CD8-positive, alpha-beta T cell (primary cell): ENCODE measurements at regions of chr1 and their contacts with region 1.

Region 1: GRCh38 chr1:38818175-38818976 is 41.2 kb downstream of the RRAGC start:
- DNase-seq: peak; percentile 21 to 69 (median 47)
- ATAC-seq: peak; percentile 64
- H3K4me3 ChIP-seq: peak overlapping the region in 1 of 2 experiments; percentile 35
- H3K4me3 Mint-ChIP-seq: peak overlapping the region; percentile 43
- H3K27ac ChIP-seq: no peak overlapping the region
- H3K27ac Mint-ChIP-seq: no peak overlapping the region
- H3K4me1 ChIP-seq: peaks cover 20% of the 10 kb centered on the region
- H3K4me1 Mint-ChIP-seq: peaks cover 14% of the 10 kb centered on the region
- H3K27me3 ChIP-seq: peaks cover 22% of the 10 kb centered on the region in 2 experiments
- H3K27me3 Mint-ChIP-seq: peaks cover 59% of the 10 kb centered on the region
- CTCF ChIP-seq: peak; percentile 80

Region 2: GRCh38 chr1:38026592-38027200 is 791.7 kb before region 1 on chr1:
- CTCF ChIA-PET with region 1: no interaction called
- POLR2A ChIA-PET with region 1: no interaction called
- intact Hi-C with region 1: loop called in 1 of 2 experiments (anchors 5 kb)
- DNase-seq: peak in 2 of 9 experiments; percentile 41 to 54
- ATAC-seq: no peak
- H3K4me3 ChIP-seq: no peak overlapping the region
- H3K4me3 Mint-ChIP-seq: no peak overlapping the region
- H3K27ac ChIP-seq: no peak overlapping the region
- H3K27ac Mint-ChIP-seq: no peak overlapping the region
- H3K4me1 ChIP-seq: peaks cover 18% of the 10 kb centered on the region
- H3K4me1 Mint-ChIP-seq: peaks cover 32% of the 10 kb centered on the region
- H3K27me3 ChIP-seq: no peaks in the 10 kb centered on the region
- H3K27me3 Mint-ChIP-seq: no peaks in the 10 kb centered on the region
- CTCF ChIP-seq: no peak

Region 3: DNA sequence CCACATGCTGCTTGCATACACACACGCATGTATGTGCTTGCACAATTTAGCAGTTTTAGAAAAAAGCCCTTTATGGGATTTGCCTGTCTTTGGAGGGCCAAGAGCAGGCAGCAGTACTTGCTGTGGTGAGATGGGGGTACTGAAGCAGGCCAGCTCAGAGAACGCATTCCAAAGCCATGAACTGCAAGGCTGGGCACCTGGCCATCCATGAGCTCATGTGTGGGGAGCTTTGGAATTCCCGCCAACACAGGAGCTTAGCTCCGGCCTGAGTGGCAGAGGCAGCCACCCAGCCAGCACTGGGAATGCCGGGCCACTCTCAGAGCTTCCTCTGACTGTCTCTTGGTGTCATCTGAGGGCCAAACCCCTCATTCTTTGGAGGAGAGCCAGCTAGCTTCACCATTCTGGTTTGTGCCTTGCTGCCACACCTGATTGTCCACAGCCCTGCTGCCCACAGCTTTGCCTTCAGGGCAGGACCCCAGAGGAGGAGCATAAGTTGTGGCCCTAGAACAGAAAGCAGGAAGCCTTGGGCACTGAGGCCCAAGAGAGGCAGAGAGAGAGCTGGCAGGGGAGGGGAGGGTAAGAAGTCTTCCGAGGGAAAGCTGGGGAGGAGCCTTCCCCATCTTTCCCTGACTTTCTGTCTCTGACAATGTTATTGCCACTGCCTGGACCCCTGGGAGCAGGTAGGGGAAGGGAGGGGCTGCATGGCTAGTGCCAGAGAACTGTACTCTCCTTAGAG is 679.7 kb before region 1 on chr1:
- CTCF ChIA-PET with region 1: no interaction called
- POLR2A ChIA-PET with region 1: no interaction called
- intact Hi-C with region 1: loop called in 1 of 2 experiments (anchors 10 kb)
- DNase-seq: no peak
- ATAC-seq: no peak
- H3K4me3 ChIP-seq: no peak overlapping the region
- H3K4me3 Mint-ChIP-seq: no peak overlapping the region
- H3K27ac ChIP-seq: no peak overlapping the region
- H3K27ac Mint-ChIP-seq: no peak overlapping the region
- H3K4me1 ChIP-seq: no peaks in the 10 kb centered on the region
- H3K4me1 Mint-ChIP-seq: no peaks in the 10 kb centered on the region
- H3K27me3 ChIP-seq: peaks cover 5 to 7% of the 10 kb centered on the region in 2 experiments
- H3K27me3 Mint-ChIP-seq: peaks cover 68% of the 10 kb centered on the region
- CTCF ChIP-seq: no peak

Region 4: DNA sequence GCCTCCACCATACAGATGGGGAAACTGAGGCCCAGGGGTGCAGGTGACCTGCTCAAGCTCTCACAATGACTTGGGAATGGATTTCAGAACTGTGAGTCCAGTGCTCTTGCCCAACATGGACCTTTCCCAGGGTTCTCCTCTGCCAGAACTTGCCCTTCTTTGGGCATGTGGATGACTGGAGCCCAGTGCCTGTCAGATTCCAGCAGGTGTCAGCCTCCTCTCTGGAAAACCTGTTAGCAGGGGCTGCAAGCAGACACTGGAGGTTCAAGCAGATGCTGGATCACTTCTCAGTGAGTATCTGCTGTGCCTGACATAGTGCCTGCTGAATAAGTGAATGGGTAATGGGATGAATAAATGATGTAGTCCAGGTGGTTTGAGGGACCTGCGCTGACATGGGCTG is 457.6 kb before region 1 on chr1:
- CTCF ChIA-PET with region 1: no interaction called
- POLR2A ChIA-PET with region 1: no interaction called
- intact Hi-C with region 1: loop called in 1 of 2 experiments (anchors 10 kb)
- DNase-seq: peak in 2 of 9 experiments; percentile 5 to 7
- ATAC-seq: no peak
- H3K4me3 ChIP-seq: no peak overlapping the region
- H3K4me3 Mint-ChIP-seq: no peak overlapping the region
- H3K27ac ChIP-seq: no peak overlapping the region
- H3K27ac Mint-ChIP-seq: no peak overlapping the region
- H3K4me1 ChIP-seq: no peaks in the 10 kb centered on the region
- H3K4me1 Mint-ChIP-seq: no peaks in the 10 kb centered on the region
- H3K27me3 ChIP-seq: no peaks in the 10 kb centered on the region
- H3K27me3 Mint-ChIP-seq: peaks cover 16% of the 10 kb centered on the region
- CTCF ChIP-seq: no peak

Region 5: GRCh38 chr1:38489844-38490270 is 328.5 kb before region 1 on chr1:
- CTCF ChIA-PET with region 1: interaction called, 5 read pairs
- POLR2A ChIA-PET with region 1: no interaction called
- intact Hi-C with region 1: loop called in 1 of 2 experiments (anchors 5 kb)
- DNase-seq: peak in 7 of 9 experiments; percentile 11 to 62 (median 47)
- ATAC-seq: no peak
- H3K4me3 ChIP-seq: no peak overlapping the region
- H3K4me3 Mint-ChIP-seq: no peak overlapping the region
- H3K27ac ChIP-seq: no peak overlapping the region
- H3K27ac Mint-ChIP-seq: no peak overlapping the region
- H3K4me1 ChIP-seq: no peaks in the 10 kb centered on the region
- H3K4me1 Mint-ChIP-seq: no peaks in the 10 kb centered on the region
- H3K27me3 ChIP-seq: no peaks in the 10 kb centered on the region
- H3K27me3 Mint-ChIP-seq: peaks cover 22% of the 10 kb centered on the region
- CTCF ChIP-seq: peak; percentile 53

Region 6: DNA sequence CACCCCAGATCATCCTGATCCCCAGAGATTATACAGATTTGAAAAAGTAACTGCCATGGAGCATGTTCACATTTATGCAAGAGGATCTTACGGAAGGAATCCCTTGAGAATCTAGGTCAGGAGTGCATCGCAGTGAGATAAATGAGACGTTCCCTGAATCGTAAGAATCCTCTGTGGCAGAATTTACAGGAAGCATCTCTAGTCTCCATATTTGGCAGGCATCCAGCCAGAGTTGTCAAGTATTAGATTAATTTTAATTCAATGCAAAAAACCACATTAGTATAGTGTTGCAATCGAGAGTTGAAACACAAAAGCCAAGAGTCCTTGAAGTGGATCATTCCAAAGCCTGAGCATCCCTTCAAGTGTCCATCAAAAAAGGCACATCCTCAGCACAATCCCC is 59.6 kb before region 1 on chr1:
- CTCF ChIA-PET with region 1: no interaction called
- POLR2A ChIA-PET with region 1: no interaction called
- intact Hi-C with region 1: no loop called
- DNase-seq: no peak
- ATAC-seq: no peak
- H3K4me3 ChIP-seq: no peak overlapping the region
- H3K4me3 Mint-ChIP-seq: no peak overlapping the region
- H3K27ac ChIP-seq: no peak overlapping the region
- H3K27ac Mint-ChIP-seq: no peak overlapping the region
- H3K4me1 ChIP-seq: no peaks in the 10 kb centered on the region
- H3K4me1 Mint-ChIP-seq: no peaks in the 10 kb centered on the region
- H3K27me3 ChIP-seq: no peaks in the 10 kb centered on the region
- H3K27me3 Mint-ChIP-seq: peaks cover 21% of the 10 kb centered on the region
- CTCF ChIP-seq: no peak